Activated naive CD4-positive, alpha-beta T cell treated with anti-CD3 and anti-CD28 coated beads for 36 hours (primary cell): ENCODE measurements at regions of chr5 and their contacts with region 1.

Region 1: DNA sequence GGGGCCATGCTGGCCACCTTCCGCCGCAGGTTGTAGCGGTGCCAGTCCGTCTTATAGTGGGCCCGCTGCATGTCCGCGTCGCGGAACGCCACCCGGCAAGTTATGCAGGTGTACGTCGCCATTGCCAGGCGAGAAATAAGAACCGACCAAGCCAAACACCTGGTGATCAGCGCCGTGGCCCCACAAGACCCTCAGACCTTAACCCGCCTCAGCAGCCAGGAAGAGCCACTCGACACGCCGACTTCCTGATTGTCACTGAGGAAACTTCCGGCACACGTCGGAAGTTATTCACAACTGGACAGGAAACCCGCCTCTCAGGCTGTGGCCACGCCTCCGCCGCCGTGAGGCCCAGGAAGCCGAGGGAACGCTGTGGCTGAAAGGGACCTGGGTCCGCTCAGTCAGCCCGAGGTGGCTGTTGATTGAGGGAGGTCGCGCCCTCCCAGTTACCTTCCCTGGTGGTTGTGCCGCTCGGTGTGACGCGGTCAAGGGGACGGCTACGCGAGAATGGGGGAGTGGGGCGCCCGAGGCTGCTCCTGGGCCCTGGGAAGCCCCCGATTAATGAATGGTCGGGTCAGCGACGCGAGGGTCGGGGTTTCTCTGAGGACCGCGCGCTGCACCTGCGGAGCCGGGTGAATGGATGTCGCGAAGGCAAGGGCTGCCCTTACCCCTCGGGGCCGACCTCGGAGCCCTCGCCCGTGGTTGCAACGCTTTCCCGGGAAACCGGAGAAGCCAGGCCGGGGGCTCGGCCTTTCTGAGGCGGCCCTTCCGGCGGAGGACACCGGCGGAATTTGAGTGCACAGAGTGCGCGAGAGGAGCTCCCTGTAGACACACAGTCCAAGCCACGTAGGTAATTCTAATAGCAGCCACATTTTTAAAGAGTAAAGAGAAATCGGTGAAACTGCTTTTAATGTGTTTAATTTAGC is at the start of gene ZNF622:
- DNase-seq: peak; percentile 92
- H3K4me3 Mint-ChIP-seq: peak within 1 kb of the TSS; percentile 96
- H3K27ac Mint-ChIP-seq: peak within 1 kb of the TSS; percentile 93
- H3K4me1 Mint-ChIP-seq: peaks cover 70% of the 10 kb centered on the region
- H3K27me3 Mint-ChIP-seq: no peaks in the 10 kb centered on the region
- total RNA-seq, gene ZNF622: 25.7 to 25.9 TPM

Region 2: GRCh38 chr5:14595189-14595588 is 1870.6 kb before region 1 on chr5:
- CTCF ChIA-PET with region 1: no interaction called
- intact Hi-C with region 1: loop called (anchors 10 kb)
- DNase-seq: peak; percentile 51
- H3K4me3 Mint-ChIP-seq: peak overlapping the region; percentile 68
- H3K27ac Mint-ChIP-seq: peak overlapping the region; percentile 90
- H3K4me1 Mint-ChIP-seq: peaks cover 84% of the 10 kb centered on the region
- H3K27me3 Mint-ChIP-seq: no peaks in the 10 kb centered on the region

Region 3: GRCh38 chr5:16057277-16057676 is 408.5 kb before region 1 on chr5:
- CTCF ChIA-PET with region 1: no interaction called
- intact Hi-C with region 1: no loop called
- DNase-seq: no peak
- H3K4me3 Mint-ChIP-seq: no peak overlapping the region
- H3K27ac Mint-ChIP-seq: no peak overlapping the region
- H3K4me1 Mint-ChIP-seq: no peaks in the 10 kb centered on the region
- H3K27me3 Mint-ChIP-seq: no peaks in the 10 kb centered on the region

Region 4: GRCh38 chr5:16427587-16427986 is 38.2 kb before region 1 on chr5:
- CTCF ChIA-PET with region 1: no interaction called
- intact Hi-C with region 1: no loop called
- DNase-seq: no peak
- H3K4me3 Mint-ChIP-seq: no peak overlapping the region
- H3K27ac Mint-ChIP-seq: no peak overlapping the region
- H3K4me1 Mint-ChIP-seq: no peaks in the 10 kb centered on the region
- H3K27me3 Mint-ChIP-seq: peaks cover 3% of the 10 kb centered on the region

Region 5: GRCh38 chr5:16552666-16553343 is 87.0 kb after region 1 on chr5:
- CTCF ChIA-PET with region 1: interaction called, 3 read pairs
- intact Hi-C with region 1: loop called (anchors 1 kb)
- DNase-seq: peak; percentile 83
- H3K4me3 Mint-ChIP-seq: no peak overlapping the region
- H3K27ac Mint-ChIP-seq: no peak overlapping the region
- H3K4me1 Mint-ChIP-seq: peaks cover 41% of the 10 kb centered on the region
- H3K27me3 Mint-ChIP-seq: no peaks in the 10 kb centered on the region

Region 6: GRCh38 chr5:16626663-16627264 is 161.0 kb after region 1 on chr5:
- CTCF ChIA-PET with region 1: no interaction called
- intact Hi-C with region 1: loop called (anchors 1 kb)
- DNase-seq: peak; percentile 66
- H3K4me3 Mint-ChIP-seq: no peak overlapping the region
- H3K27ac Mint-ChIP-seq: peak overlapping the region; percentile 77
- H3K4me1 Mint-ChIP-seq: peaks cover 46% of the 10 kb centered on the region
- H3K27me3 Mint-ChIP-seq: no peaks in the 10 kb centered on the region

Region 7: GRCh38 chr5:16784843-16785791 is 319.3 kb after region 1 on chr5:
- CTCF ChIA-PET with region 1: no interaction called
- intact Hi-C with region 1: loop called (anchors 2 kb)
- DNase-seq: peak; percentile 70
- H3K4me3 Mint-ChIP-seq: no peak overlapping the region
- H3K27ac Mint-ChIP-seq: no peak overlapping the region
- H3K4me1 Mint-ChIP-seq: peaks cover 18% of the 10 kb centered on the region
- H3K27me3 Mint-ChIP-seq: no peaks in the 10 kb centered on the region

Region 8: GRCh38 chr5:16866795-16867236 is 401.0 kb after region 1 on chr5:
- CTCF ChIA-PET with region 1: no interaction called
- intact Hi-C with region 1: no loop called
- DNase-seq: no peak
- H3K4me3 Mint-ChIP-seq: no peak overlapping the region
- H3K27ac Mint-ChIP-seq: no peak overlapping the region
- H3K4me1 Mint-ChIP-seq: no peaks in the 10 kb centered on the region
- H3K27me3 Mint-ChIP-seq: no peaks in the 10 kb centered on the region

Region 9: DNA sequence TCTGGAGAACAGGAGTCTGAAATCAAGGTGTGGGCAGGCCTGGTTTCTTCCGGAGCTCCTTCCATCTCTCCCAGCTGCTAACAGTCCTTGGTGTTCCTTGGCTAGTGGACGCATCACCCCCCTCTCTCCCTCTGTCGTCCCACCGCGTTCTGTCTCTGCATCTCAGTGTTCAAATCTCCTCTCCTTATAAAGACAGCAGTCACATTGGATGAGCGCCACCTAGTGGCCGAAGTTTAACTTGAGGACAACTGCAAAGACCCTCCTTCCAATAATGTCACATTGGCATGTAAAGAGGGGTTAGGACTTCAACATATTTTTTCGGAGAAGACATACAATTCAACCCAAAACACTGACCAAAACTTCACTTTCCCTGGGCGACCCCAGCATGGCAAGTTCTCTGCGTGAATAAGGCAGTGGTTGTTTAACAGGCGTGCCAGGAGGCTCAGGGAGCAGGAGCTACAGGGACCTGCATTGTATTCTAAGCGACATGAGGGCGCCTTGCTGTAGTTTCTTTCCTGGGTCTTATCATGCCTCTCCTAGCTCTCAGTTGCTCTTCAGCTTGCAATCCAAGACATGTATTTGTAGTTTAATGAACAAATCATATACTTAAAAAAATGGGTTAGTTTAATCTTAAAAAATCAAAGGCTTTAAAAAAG is 723.7 kb after region 1 on chr5:
- CTCF ChIA-PET with region 1: no interaction called
- intact Hi-C with region 1: loop called (anchors 10 kb)
- DNase-seq: peak; percentile 79
- H3K4me3 Mint-ChIP-seq: no peak overlapping the region
- H3K27ac Mint-ChIP-seq: no peak overlapping the region
- H3K4me1 Mint-ChIP-seq: peaks cover 2% of the 10 kb centered on the region
- H3K27me3 Mint-ChIP-seq: peaks cover 10% of the 10 kb centered on the region